ENCODE measurements at regions of chr11 and their contacts with region 1.

Region 1: DNA sequence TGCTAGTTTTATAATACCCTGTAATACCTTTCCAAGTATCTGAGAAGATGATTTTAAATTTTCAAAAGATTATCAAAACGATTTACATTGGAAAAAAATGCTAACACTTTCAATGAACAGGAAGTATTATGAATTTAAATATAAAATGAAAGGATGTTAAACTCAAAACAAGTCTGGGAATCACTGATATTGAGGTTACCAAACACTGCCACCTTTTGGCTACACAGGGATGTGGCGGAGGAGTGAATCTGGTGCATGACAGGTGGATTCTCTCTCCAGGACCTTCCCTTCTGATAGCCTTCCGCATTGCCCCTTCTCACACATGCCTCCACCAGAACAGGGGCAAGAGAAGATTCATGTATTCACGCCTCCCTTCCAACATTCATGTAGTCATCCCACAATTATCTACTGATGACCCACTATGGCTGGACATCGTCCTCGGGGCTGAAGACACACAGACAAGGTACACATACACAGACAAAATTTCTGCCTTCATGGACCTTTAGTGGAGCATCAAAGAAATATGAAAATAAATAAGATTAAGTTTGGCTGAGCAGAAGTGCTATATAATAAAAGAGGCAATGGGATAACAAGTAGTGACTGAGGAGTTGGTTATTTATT is 34.7 kb downstream of the ATG16L2 start:
- DNase-seq: no peak
- H3K4me3 ChIP-seq: no peak overlapping the region
- H3K27ac ChIP-seq: no peak overlapping the region
- H3K27me3 ChIP-seq: no peaks in the 10 kb centered on the region
- CTCF ChIP-seq: peak; percentile 79

Region 2: DNA sequence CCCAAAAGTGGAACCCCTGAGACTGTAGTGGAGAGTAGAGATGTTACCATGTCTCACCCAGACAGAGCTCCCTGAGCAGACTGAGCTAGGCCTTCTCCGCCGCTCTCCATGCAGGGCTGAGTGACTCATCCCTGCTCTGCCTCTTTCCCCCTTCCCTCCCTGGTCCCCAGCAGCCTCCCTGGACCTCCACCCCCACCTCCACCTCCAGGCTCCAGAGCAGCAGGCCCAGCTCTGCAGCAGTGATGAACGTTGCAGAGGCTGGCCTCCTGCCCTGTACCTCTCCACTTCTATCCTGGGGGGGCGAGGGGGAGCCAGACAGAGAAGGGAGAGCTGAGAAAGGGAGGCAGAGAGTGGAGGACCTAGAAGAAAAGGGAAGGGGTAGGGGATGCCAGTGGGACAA is 77.4 kb before region 1 on chr11:
- CTCF ChIA-PET with region 1: no interaction called
- POLR2A ChIA-PET with region 1: no interaction called
- DNase-seq: peak; percentile 27
- H3K4me3 ChIP-seq: no peak overlapping the region
- H3K27ac ChIP-seq: peak overlapping the region; percentile 39
- H3K27me3 ChIP-seq: no peaks in the 10 kb centered on the region
- CTCF ChIP-seq: no peak

Region 3: GRCh38 chr11:72821883-72822799 is 26.8 kb before region 1 on chr11:
- CTCF ChIA-PET with region 1: interaction called, 10 read pairs
- POLR2A ChIA-PET with region 1: no interaction called
- DNase-seq: peak; percentile 58
- H3K4me3 ChIP-seq: peak overlapping the region; percentile 63
- H3K27ac ChIP-seq: no peak overlapping the region
- H3K27me3 ChIP-seq: no peaks in the 10 kb centered on the region
- CTCF ChIP-seq: peak; percentile 4; the same call in 1 of the 2 replicates

Region 4: GRCh38 chr11:73921180-73921579 is 1072.2 kb after region 1 on chr11:
- CTCF ChIA-PET with region 1: no interaction called
- POLR2A ChIA-PET with region 1: no interaction called
- DNase-seq: no peak
- H3K4me3 ChIP-seq: no peak overlapping the region
- H3K27ac ChIP-seq: no peak overlapping the region
- H3K27me3 ChIP-seq: no peaks in the 10 kb centered on the region
- CTCF ChIP-seq: no peak

Measured in AG04450 (cell line).